CD8-positive, alpha-beta T cell (primary cell): ENCODE measurements at regions of chr1 and their contacts with region 1.

Region 1: DNA sequence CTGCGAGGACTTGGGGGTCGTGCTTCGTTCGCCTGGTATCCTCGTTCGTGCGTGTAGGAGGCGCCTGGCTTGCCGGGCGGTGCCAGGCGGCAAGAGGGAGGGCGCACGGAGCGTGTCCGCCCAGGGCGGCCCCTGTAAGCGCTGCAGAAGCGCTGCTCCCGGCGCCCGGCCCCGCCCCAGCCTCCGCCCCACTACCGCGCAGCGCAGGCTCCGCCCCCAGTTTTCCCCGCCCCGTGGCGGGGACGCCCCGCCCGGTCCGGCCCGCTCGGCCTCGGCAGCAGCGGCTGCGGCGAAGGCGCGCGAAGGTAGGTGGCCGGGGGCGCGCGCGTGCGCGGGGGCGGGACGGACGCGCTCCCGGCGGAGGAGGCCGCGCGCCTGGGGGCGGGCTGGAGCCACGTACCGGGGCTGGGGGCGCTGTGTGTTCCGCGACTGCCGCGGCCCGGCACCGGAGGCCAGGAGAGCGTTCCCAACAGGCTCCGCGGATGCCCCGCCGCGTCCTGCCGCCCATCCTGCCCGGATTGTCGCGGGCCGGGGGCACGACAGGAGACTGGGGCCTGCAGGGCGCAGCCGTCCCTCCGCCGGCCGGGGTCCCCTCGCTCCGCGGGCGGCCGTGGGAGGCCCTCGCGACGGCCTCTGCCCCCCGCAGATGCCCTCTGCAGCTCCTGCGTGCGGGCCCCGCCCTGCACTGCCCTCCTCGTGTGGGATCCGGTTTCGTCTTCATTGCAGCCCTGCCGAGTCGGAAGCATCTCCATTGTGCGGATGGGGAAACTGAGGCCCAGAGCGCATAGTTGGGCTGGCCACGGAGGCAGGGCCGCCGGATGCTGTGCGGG is 7.7 kb upstream of the CROCC start:
- DNase-seq: peak; percentile 89 to 99 (median 97)
- ATAC-seq: peak; percentile 98
- H3K4me3 ChIP-seq: peak overlapping the region; percentile 62 to 76
- H3K4me3 Mint-ChIP-seq: peak overlapping the region; percentile 82
- H3K27ac ChIP-seq: peak overlapping the region; percentile 62 to 70
- H3K27ac Mint-ChIP-seq: peak overlapping the region; percentile 60
- H3K4me1 ChIP-seq: peaks cover 28% of the 10 kb centered on the region
- H3K4me1 Mint-ChIP-seq: peaks cover 28% of the 10 kb centered on the region
- H3K27me3 ChIP-seq: no peaks in the 10 kb centered on the region
- H3K27me3 Mint-ChIP-seq: no peaks in the 10 kb centered on the region
- CTCF ChIP-seq: no peak

Region 2: GRCh38 chr1:17053685-17054410 is 139.8 kb after region 1 on chr1 and contains the start of gene SDHB:
- CTCF ChIA-PET with region 1: no interaction called
- POLR2A ChIA-PET with region 1: no interaction called
- intact Hi-C with region 1: loop called in 1 of 2 experiments (anchors 1 kb)
- DNase-seq: peak; percentile 97 to 100 (median 99)
- ATAC-seq: peak; percentile 98
- H3K4me3 ChIP-seq: peak within 1 kb of the TSS; percentile 53 to 90
- H3K4me3 Mint-ChIP-seq: peak within 1 kb of the TSS; percentile 99
- H3K27ac ChIP-seq: peak within 1 kb of the TSS; percentile 67 to 84
- H3K27ac Mint-ChIP-seq: peak within 1 kb of the TSS; percentile 98
- H3K4me1 ChIP-seq: peaks cover 16% of the 10 kb centered on the region
- H3K4me1 Mint-ChIP-seq: peaks cover 33% of the 10 kb centered on the region
- H3K27me3 ChIP-seq: no peaks in the 10 kb centered on the region
- H3K27me3 Mint-ChIP-seq: peaks cover 6% of the 10 kb centered on the region
- CTCF ChIP-seq: no peak
- total RNA-seq, gene SDHB: 66.2 to 71.8 TPM